Posterior cingulate gyrus (tissue), 11 donors: ENCODE measurements at regions of chr17 and their contacts with region 1.

Region 1: GRCh38 chr17:10115071-10115539 is 83.3 kb downstream of the GAS7 start:
- DNase-seq: peak; percentile 57 to 97 (median 76)

Region 2: DNA sequence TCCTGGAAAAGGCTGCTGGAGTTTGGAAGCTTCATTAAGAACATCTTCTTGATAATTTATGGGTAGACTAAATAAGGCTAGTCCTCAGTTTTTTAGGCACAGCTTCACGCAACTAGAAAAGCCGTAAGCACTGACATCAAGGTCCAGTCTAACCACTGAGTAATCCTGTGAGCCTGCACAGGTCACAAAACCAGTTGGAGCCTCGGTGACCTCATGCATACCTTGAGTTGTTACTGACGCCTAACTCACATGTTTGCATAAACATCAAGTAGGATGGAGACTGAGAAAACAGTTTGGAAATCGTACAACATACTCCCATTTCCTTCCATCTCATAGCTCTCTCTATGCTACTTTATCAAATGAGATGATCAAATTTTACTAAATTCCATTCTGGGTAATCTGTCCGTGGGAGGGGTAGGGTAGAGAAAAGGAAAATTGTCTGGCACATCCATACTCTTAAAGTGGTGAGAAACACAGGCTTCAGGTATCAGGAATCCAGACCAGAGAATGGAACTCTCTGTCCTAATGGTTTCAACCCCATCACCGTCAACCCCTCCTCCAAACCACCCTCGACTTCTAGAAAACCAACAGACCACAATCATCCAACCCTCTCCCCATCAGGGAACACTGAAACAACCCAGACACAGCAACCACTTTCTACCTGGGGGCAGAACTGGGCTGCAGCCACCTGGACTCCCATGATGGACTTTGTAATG is 146.0 kb before region 1 on chr17:
- intact Hi-C with region 1: loop called (anchors 10 kb)
- DNase-seq: peak in 1 of 10 donors; percentile 16

Region 3: DNA sequence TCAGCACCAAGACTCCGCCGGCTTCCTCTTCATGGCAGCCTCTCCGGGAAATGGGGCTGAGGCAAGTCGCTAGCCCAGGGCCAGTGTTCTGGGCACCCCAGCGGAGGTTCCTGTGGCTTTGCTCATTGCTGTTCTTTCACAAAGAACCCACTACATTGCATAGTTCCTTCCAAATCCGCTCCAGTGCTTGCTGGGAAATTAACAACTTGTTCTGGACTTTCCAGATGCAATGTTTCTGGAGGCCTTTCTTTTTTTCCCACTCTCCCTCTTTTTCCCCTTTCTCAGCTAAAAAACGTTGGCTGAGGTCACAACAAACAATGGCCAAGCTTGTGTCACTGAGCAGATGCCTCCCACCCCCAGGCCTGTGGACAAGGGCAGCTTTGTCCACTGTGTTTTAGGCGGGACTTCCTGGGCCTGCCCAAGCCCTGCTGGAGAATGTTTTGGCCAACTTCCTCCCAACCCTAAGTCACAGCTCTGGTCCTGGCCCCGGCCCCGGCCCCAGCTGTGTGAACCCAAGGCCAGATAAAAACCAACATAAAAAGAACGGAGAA is 78.5 kb before region 1 on chr17:
- intact Hi-C with region 1: loop called (anchors 5 kb)
- DNase-seq: peak; percentile 68 to 98 (median 86)

Region 4: GRCh38 chr17:10087081-10087754 is 27.9 kb before region 1 on chr17:
- intact Hi-C with region 1: no loop called
- DNase-seq: peak in 1 of 10 donors; percentile 41